Right lobe of liver (tissue), 6 donors: ENCODE measurements at regions of chr2 and their contacts with region 1.

Region 1: DNA sequence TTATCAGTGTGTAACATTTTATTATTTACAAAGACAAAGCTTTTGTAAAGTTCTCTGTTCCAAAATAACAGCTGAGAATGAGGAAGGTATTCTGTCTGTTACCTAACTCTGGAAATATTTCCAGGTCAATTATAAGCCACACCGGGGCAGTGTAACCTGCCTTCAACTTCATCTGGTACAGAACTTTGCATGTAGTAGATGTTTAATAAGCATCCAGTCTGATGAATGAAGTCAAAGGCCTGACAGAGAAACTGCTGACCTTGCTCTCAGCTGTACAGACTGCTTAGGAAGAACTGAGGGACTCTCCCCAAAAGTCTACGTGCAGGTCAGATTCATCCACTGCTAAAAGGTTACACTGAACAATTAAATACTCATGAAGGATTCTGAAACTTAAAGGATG is 43.3 kb downstream of the WDFY1 start:
- DNase-seq: no peak
- ATAC-seq: peak; percentile 95 to 98 (median 96)
- H3K4me3 ChIP-seq: no peak overlapping the region
- H3K27ac ChIP-seq: peak overlapping the region in 1 of 3 donors; percentile 16
- H3K4me1 ChIP-seq: no peaks in the 10 kb centered on the region
- H3K27me3 ChIP-seq: no peaks in the 10 kb centered on the region
- CTCF ChIP-seq: peak; percentile 39 to 56 (median 52)
- POLR2A ChIP-seq: no peak

Region 2: DNA sequence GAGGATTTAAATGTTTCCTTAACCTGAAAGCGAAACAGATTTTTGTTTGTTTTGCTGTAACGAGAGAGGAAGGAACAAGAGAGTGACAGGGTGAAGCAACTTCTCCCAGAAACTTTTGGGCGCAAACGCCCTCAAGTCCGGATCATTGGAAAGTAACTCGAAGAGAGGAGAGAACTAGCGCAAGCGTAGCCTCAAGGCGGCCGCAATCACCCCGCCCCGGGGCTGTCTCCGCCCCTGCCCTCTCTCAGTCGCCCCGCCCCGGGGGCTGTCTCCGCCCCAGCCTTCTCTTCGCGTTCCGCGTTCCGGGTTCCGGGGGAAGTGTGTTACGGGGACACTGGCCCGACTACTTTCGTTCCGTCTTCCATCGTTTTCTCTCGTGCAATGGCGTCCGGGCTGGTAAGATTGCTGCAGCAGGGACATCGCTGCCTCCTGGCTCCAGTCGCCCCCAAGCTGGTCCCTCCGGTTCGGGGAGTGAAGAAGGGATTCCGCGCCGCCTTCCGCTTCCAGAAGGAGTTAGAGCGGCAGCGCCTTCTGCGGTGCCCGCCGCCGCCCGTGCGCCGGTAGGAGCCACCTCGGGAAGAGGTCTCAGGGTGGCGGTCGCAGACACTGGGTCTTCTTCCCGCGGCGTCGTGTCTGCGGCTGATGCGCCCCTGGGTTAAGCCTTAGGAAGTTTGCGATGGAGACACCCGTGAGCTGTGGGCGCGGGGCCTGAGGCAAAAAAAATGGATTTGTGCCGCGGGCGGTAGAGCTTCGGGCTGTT is 55.4 kb after region 1 on chr2 and contains the start of gene MRPL44:
- intact Hi-C with region 1: loop called in 1 of 2 experiments (anchors 10 kb)
- DNase-seq: peak; percentile 97 to 98 (median 97)
- ATAC-seq: peak; percentile 100
- H3K4me3 ChIP-seq: peak within 1 kb of the TSS; percentile 83 to 90 (median 83)
- H3K27ac ChIP-seq: peak within 1 kb of the TSS; percentile 66 to 83 (median 79)
- H3K4me1 ChIP-seq: peaks cover 0 to 25% (median 4%) of the 10 kb centered on the region in 4 donors
- H3K27me3 ChIP-seq: no peaks in the 10 kb centered on the region
- CTCF ChIP-seq: peak in 1 of 4 donors; percentile 5
- POLR2A ChIP-seq: peak; percentile 58
- total RNA-seq, gene MRPL44: 20.4 to 38.5 (median 23.5) TPM